A673 (cell line): ENCODE measurements at regions of chr21 and their contacts with region 1.

Region 1: DNA sequence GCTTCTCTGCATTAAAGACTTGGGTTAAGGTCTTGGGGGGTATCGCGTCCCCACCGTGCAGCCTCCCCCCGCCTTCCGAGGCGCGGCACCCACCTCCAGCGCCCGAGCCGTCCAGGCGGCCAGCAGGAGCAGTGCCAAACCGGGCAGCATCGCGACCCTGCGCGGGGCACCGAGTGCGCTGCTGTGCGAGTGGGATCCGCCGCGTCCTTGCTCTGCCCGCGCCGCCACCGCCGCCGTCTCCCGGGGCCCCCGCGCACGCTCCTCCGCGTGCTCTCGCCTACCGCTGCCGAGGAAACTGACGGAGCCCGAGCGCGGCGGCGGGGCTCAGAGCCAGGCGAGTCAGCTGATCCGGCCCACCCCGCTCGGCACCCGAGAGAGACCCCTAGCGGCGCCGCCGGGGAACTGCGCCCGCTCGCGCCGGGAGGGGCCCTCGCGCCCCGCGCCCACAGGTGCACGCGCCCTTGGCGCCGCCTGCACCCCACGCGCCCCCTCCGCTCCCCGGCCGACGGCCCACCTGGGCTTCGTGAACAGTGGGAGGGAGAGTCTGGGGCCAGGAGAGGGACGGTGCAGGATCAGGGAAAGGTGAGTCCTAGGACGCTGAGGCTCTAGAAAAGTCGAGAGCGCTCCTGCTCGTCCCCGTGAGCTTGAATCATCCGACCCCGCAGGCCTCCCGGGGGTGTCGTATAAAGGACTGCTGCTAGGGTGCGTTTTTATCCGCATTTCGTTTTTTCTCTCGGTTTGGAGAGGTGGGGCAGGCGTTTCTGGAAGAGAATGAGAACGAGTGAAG is at the start of gene APP:
- DNase-seq: peak; percentile 90
- H3K4me3 ChIP-seq: peak within 1 kb of the TSS; percentile 91
- H3K27ac ChIP-seq: peak within 1 kb of the TSS; percentile 90
- H3K4me1 ChIP-seq: peaks cover 32% of the 10 kb centered on the region
- H3K27me3 ChIP-seq: no peaks in the 10 kb centered on the region
- CTCF ChIP-seq: peak; percentile 69
- total RNA-seq, gene APP: 531 and 539 TPM in 2 replicates

Region 2: GRCh38 chr21:25607151-25608043 is 563.3 kb before region 1 on chr21 and contains the start of gene MRPL39:
- CTCF ChIA-PET with region 1: no interaction called
- POLR2A ChIA-PET with region 1: no interaction called
- intact Hi-C with region 1: loop called (anchors 10 kb)
- DNase-seq: peak; percentile 95
- H3K4me3 ChIP-seq: peak within 1 kb of the TSS; percentile 86
- H3K27ac ChIP-seq: peak within 1 kb of the TSS; percentile 94
- H3K4me1 ChIP-seq: peaks cover 4% of the 10 kb centered on the region
- H3K27me3 ChIP-seq: no peaks in the 10 kb centered on the region
- CTCF ChIP-seq: peak; percentile 81
- total RNA-seq, gene MRPL39: 57.1 and 57.6 TPM in 2 replicates

Region 3: GRCh38 chr21:25895565-25896205 is 275.0 kb before region 1 on chr21:
- CTCF ChIA-PET with region 1: interaction called, 3 read pairs
- POLR2A ChIA-PET with region 1: interaction called, 4 read pairs
- intact Hi-C with region 1: loop called (anchors 2 kb)
- DNase-seq: peak; percentile 83
- H3K4me3 ChIP-seq: no peak overlapping the region
- H3K27ac ChIP-seq: peak overlapping the region; percentile 59
- H3K4me1 ChIP-seq: peaks cover 40% of the 10 kb centered on the region
- H3K27me3 ChIP-seq: no peaks in the 10 kb centered on the region
- CTCF ChIP-seq: peak; percentile 69

Region 4: GRCh38 chr21:26007951-26008498 is 162.6 kb before region 1 on chr21:
- CTCF ChIA-PET with region 1: no interaction called
- POLR2A ChIA-PET with region 1: no interaction called
- intact Hi-C with region 1: loop called (anchors 5 kb)
- DNase-seq: peak; percentile 67
- H3K4me3 ChIP-seq: peak overlapping the region; percentile 7
- H3K27ac ChIP-seq: peak overlapping the region; percentile 76
- H3K4me1 ChIP-seq: peaks cover 39% of the 10 kb centered on the region
- H3K27me3 ChIP-seq: no peaks in the 10 kb centered on the region
- CTCF ChIP-seq: no peak

Region 5: DNA sequence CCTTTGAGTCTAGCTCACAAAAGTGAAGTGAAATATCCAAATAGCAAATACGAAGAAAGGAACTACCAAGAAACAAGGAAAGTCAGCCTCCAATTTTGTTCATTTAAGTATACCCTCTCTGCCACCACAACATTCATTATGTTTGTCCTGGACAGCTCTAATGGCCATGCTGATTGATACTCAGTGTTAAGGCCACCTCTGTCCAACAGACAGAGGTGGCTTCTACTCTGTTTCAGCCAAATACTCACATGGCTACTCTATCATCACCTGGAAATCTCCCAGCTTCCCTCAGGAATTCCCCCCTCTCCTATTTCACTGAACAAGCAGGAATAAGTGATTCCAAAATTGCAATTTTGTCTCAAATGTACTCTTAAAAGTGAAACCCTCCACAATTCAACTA is 10.8 kb before region 1 on chr21:
- CTCF ChIA-PET with region 1: no interaction called
- POLR2A ChIA-PET with region 1: no interaction called
- intact Hi-C with region 1: no loop called
- DNase-seq: no peak
- H3K4me3 ChIP-seq: no peak overlapping the region
- H3K27ac ChIP-seq: no peak overlapping the region
- H3K4me1 ChIP-seq: peaks cover 33% of the 10 kb centered on the region
- H3K27me3 ChIP-seq: no peaks in the 10 kb centered on the region
- CTCF ChIP-seq: no peak

Region 6: GRCh38 chr21:26490771-26491170 is 320.1 kb after region 1 on chr21:
- CTCF ChIA-PET with region 1: no interaction called
- POLR2A ChIA-PET with region 1: no interaction called
- intact Hi-C with region 1: loop called (anchors 5 kb)
- DNase-seq: peak; percentile 78
- H3K4me3 ChIP-seq: no peak overlapping the region
- H3K27ac ChIP-seq: peak overlapping the region; percentile 90
- H3K4me1 ChIP-seq: peaks cover 62% of the 10 kb centered on the region
- H3K27me3 ChIP-seq: no peaks in the 10 kb centered on the region
- CTCF ChIP-seq: no peak

Region 7: GRCh38 chr21:26544201-26544775 is 373.6 kb after region 1 on chr21:
- CTCF ChIA-PET with region 1: no interaction called
- POLR2A ChIA-PET with region 1: no interaction called
- intact Hi-C with region 1: no loop called
- DNase-seq: peak; percentile 44
- H3K4me3 ChIP-seq: no peak overlapping the region
- H3K27ac ChIP-seq: no peak overlapping the region
- H3K4me1 ChIP-seq: peaks cover 83% of the 10 kb centered on the region
- H3K27me3 ChIP-seq: no peaks in the 10 kb centered on the region
- CTCF ChIP-seq: no peak